AG04450 (cell line): ENCODE measurements at regions of chr7 and their contacts with region 1.

Region 1: GRCh38 chr7:134514663-134515062 is 12.7 kb upstream of the AKR1B10 start:
- DNase-seq: peak; percentile 57
- H3K4me3 ChIP-seq: no peak overlapping the region
- H3K27ac ChIP-seq: no peak overlapping the region
- H3K27me3 ChIP-seq: no peaks in the 10 kb centered on the region
- CTCF ChIP-seq: peak; percentile 82

Region 2: DNA sequence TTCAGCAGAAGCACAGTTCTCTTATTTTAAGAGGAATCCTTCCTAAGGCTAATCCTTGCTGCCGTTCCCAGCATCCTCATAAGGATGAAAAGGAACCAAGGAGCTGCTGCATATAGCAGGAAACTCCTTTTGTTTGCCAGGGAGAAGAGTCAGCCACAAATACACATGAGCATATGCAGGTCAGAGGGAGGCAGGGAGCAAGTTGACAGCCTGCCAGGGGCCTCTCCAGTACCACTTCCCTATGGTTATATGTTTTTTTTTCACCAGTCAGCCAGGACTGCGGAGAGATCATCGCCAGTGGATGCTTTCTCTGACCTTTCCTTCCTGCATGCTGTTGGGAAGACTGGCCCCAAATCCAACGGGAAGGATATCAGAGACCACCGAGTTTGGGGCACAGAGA is 237.7 kb before region 1 on chr7:
- CTCF ChIA-PET with region 1: no interaction called
- POLR2A ChIA-PET with region 1: no interaction called
- DNase-seq: no peak
- H3K4me3 ChIP-seq: no peak overlapping the region
- H3K27ac ChIP-seq: no peak overlapping the region
- H3K27me3 ChIP-seq: peaks cover 3% of the 10 kb centered on the region
- CTCF ChIP-seq: no peak

Region 3: DNA sequence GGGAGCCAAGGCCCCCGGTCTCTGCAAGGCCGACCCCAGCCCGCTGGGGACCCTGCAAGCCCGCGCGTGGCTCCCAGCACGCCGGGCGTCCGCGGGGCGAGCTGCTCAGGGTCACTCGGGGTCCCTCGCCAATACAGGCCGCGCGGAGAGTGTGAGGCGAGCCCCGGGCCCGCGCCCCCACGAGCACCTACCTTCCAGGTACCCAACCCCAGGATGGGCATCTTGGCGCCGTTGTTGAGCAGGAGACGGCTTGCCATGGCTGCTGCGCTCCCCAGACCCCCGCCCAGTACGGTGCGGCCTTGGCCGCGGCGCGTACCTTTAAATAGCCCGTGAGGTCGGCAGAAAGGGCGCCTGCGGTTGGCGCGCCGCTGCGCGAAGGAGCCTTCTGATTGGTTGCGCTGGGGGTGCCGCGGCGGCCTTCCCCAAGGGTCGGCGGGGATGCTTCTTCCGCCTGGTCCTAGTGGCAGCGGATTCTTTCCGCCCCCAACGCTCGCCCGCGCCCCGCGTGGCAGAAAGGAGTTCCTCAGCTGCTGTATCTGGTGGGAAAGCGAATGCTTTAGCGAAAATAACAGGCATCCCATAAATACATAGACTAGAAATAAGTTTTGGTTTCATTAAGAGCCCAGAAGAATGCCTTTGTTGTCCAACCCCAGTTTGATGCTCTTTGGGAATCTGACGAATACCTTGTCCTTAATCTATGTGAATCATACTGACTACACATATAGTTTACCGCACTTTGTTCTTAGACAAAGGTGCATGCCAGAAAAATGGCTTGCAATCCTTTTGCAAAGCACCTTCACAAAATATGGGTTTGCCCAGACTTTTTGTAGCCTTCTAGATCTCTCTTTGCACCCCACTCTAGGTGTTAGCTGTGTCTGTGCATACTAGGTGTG is 55.6 kb before region 1 on chr7 and contains the start of gene AKR1B1:
- CTCF ChIA-PET with region 1: interaction called, 10 read pairs
- POLR2A ChIA-PET with region 1: no interaction called
- DNase-seq: peak; percentile 81
- H3K4me3 ChIP-seq: peak within 1 kb of the TSS; percentile 91
- H3K27ac ChIP-seq: peak within 1 kb of the TSS; percentile 57
- H3K27me3 ChIP-seq: no peaks in the 10 kb centered on the region
- CTCF ChIP-seq: peak; percentile 76
- polyA plus RNA-seq, gene AKR1B1: 337 and 347 TPM in 2 replicates

Region 4: GRCh38 chr7:134502463-134503371 is 11.9 kb before region 1 on chr7:
- CTCF ChIA-PET with region 1: interaction called, 13 read pairs
- POLR2A ChIA-PET with region 1: no interaction called
- DNase-seq: no peak
- H3K4me3 ChIP-seq: no peak overlapping the region
- H3K27ac ChIP-seq: no peak overlapping the region
- H3K27me3 ChIP-seq: no peaks in the 10 kb centered on the region
- CTCF ChIP-seq: no peak

Region 5: GRCh38 chr7:134547397-134548054 is 32.9 kb after region 1 on chr7:
- CTCF ChIA-PET with region 1: interaction called, 33 read pairs
- POLR2A ChIA-PET with region 1: no interaction called
- DNase-seq: no peak
- H3K4me3 ChIP-seq: peak overlapping the region; percentile 65
- H3K27ac ChIP-seq: peak overlapping the region; percentile 21
- H3K27me3 ChIP-seq: peaks cover 21% of the 10 kb centered on the region
- CTCF ChIP-seq: peak; percentile 93

Region 6: DNA sequence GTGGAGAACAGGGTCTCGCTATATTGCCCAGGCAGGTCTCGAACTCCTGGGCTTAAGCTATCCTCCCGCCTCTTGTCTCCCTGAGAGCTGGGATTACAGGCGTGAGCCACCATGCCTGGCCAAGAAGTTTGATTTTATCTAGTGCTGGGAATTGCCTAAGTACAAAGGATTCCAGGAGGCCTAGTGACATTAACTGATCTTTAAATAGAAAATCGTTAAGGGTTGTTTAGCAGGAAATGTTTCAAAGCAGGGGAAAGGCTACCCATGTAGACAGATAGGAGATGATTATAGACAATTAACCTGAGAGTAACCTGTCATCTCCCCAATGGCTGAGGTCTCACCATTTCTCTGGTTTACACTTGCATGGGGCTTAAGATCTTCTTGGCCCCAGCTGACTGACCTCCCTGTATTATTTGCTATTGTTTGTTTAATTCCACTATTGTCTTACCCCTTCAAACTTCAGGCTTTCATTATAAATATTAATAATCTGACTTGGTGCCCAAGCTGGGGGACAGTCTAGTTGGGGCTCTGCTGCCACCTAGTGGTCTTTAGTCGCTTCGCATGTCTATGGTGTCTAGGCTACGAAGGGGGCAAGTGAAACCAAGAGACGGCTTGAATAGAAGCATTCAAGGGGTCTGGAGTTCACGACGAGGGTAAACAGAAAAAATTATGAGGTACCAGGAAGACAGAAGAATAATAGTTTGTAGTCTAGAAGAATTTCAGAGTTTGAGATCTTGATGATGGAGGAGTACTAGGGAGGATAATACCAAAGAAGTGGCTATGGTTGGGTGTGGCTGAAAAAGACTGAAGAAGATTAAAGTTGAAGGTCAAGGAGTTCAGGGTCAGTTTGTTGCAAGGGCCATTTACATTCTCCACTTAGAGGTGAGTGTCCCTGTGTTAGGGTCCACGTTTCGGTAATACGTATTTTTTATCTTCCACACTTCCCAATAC is 91.6 kb after region 1 on chr7:
- CTCF ChIA-PET with region 1: interaction called, 92 read pairs
- POLR2A ChIA-PET with region 1: no interaction called
- DNase-seq: no peak
- H3K4me3 ChIP-seq: no peak overlapping the region
- H3K27ac ChIP-seq: no peak overlapping the region
- H3K27me3 ChIP-seq: no peaks in the 10 kb centered on the region
- CTCF ChIP-seq: peak; percentile 95

Region 7: GRCh38 chr7:134684165-134684564 is 169.5 kb after region 1 on chr7:
- CTCF ChIA-PET with region 1: no interaction called
- POLR2A ChIA-PET with region 1: no interaction called
- DNase-seq: no peak
- H3K4me3 ChIP-seq: no peak overlapping the region
- H3K27ac ChIP-seq: no peak overlapping the region
- H3K27me3 ChIP-seq: no peaks in the 10 kb centered on the region
- CTCF ChIP-seq: no peak